ENCODE measurements at regions of chr12 and their contacts with region 1.

Region 1: GRCh38 chr12:46357438-46358324 is 14.9 kb downstream of the SLC38A2 start:
- DNase-seq: no peak
- ATAC-seq: peak; percentile 33 to 49
- H3K4me3 ChIP-seq: no peak overlapping the region
- H3K27ac ChIP-seq: peak overlapping the region; percentile 47 to 69 (median 54)
- H3K4me1 ChIP-seq: peaks cover 17 to 26% of the 10 kb centered on the region in 2 donors
- H3K27me3 ChIP-seq: no peaks in the 10 kb centered on the region
- CTCF ChIP-seq: no peak
- POLR2A ChIP-seq: no peak

Region 2: DNA sequence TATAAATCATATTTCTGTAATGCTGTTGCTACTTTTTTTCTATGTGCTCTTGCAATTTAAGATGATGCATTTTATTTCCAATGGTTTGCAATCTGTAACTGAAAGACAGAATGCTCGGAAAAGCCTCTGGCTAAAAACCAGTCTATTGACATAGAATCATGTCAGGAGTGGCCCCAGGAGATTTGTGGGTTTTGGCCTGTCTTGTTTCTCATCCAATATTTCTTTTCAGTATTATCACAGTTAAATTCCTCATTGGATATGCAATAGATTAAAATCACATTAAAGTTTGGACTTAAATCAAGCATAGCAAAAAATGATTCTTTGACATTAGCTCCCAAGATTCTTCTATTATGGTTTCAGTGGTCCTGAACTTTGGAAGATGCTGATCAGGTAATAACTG is 33.9 kb after region 1 on chr12:
- in situ Hi-C with region 1: no loop called
- intact Hi-C with region 1: no loop called
- DNase-seq: no peak
- ATAC-seq: no peak
- H3K4me3 ChIP-seq: no peak overlapping the region
- H3K27ac ChIP-seq: peak overlapping the region in 2 of 4 donors; percentile 92 to 98
- H3K4me1 ChIP-seq: peaks cover 26 to 61% of the 10 kb centered on the region in 2 donors
- H3K27me3 ChIP-seq: no peaks in the 10 kb centered on the region
- CTCF ChIP-seq: no peak
- POLR2A ChIP-seq: no peak

Region 3: DNA sequence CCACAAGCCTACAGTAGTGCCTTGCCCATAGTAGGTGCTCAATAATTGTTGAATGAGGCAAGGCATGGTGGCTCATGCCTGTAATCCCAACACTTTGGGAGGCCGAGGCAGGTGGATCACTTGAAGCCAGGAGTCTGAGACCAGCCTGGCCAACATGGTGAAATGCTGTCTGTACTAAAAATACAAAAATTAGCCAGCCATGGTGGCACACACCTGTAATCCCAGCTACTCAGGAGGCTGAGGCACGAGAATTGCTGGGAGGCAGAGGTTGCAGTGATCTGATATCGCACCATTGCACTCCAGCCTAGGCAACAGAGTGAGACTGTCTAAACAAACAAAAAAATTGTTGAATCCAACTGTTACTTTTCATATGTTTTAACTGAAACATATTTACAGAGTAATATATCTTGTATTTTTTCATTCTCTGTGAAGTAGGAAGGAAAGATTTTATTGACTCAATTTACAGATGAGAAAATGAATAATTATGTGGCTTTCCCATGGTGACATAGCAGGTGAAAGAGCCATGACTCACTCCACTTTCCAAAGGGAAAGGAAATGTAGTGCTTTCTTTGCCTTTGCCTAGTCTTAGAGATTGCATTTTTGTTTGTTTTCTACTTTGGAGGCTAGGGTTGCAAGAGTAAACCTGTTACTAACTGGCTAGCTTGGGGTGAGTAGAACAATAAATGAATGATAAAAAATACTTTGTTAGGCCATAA is 563.5 kb after region 1 on chr12:
- in situ Hi-C with region 1: loop called in 1 of 4 experiments (anchors 10 kb)
- intact Hi-C with region 1: no loop called
- DNase-seq: no peak
- ATAC-seq: no peak
- H3K4me3 ChIP-seq: no peak overlapping the region
- H3K27ac ChIP-seq: no peak overlapping the region
- H3K4me1 ChIP-seq: peaks cover 0 to 7% of the 10 kb centered on the region in 2 donors
- H3K27me3 ChIP-seq: no peaks in the 10 kb centered on the region
- CTCF ChIP-seq: no peak
- POLR2A ChIP-seq: no peak